Panc1 (cell line): ENCODE measurements at regions of chr9 and their contacts with region 1.

Region 1: DNA sequence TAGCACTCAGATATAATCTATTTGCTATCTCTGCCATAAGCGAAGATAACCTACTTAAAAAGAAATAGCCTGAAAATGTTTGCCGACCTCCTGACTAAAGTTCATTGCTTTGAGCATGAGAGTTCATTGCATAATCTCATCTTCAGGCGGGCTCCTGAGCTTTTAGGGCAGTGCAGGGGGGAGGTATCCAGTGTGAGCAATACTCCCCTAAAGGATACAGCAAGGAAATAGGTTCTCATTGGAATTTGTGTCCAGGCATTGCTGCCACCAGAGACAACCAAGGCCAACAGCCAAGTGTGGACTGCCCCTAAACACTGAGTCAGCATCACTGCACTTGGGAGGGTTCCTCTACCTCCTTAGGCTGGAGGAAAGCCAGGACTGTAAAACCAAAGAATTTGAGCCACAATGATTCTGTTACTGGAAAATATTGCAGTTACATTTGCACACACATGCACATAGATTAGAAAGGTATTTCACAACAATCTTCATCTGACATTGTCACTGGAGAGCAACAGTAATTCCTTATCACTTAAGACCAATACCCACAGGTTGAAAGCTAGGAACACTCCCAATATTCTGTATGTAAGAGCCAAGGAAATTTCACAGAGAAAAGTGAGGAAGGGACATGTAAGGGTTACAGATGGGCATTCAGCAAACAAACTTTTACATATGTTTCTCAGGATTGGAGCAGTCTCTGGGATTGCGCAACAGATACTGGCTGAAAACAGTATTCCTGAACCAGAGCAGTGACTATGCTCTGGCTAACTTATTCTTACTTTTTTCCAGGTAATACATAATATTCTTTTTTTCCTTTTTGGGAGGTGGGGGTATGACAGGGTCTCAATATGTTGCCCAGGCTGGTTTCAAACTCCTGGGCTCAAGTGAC is 98.6 kb upstream of the TLE1 start:
- DNase-seq: no peak
- ATAC-seq: no peak
- H3K4me3 ChIP-seq: no peak overlapping the region
- H3K27ac ChIP-seq: no peak overlapping the region
- H3K4me1 ChIP-seq: no peaks in the 10 kb centered on the region
- H3K27me3 ChIP-seq: no peaks in the 10 kb centered on the region
- CTCF ChIP-seq: no peak

Region 2: DNA sequence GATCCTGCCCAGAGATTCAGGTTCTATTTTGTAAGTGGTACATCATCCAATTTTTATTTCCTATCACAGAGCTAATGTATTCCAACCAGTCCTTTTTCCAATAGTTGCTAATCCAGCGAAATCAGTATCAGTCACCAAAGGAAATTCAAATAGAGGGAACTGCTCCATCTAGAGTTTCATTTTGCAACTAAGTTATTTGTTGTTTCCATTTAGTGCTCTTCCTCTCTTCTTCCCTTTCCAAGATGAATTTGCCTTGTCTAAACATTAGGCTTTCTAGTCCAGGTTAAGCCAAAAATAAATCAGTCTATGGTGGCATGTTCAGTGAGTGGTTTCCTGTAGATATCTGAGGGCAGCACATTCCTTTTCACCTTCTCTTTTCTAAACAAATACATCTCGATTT is 60.5 kb after region 1 on chr9:
- CTCF ChIA-PET with region 1: no interaction called
- POLR2A ChIA-PET with region 1: no interaction called
- in situ Hi-C with region 1: no loop called
- intact Hi-C with region 1: no loop called
- DNase-seq: no peak
- ATAC-seq: no peak
- H3K4me3 ChIP-seq: no peak overlapping the region
- H3K27ac ChIP-seq: no peak overlapping the region
- H3K4me1 ChIP-seq: no peaks in the 10 kb centered on the region
- H3K27me3 ChIP-seq: no peaks in the 10 kb centered on the region
- CTCF ChIP-seq: peak; percentile 22; the same call in 1 of the 2 replicates

Region 3: GRCh38 chr9:82938340-82938739 is 1150.3 kb after region 1 on chr9:
- CTCF ChIA-PET with region 1: no interaction called
- POLR2A ChIA-PET with region 1: interaction called, 19 read pairs
- in situ Hi-C with region 1: no loop called
- intact Hi-C with region 1: no loop called
- DNase-seq: no peak
- ATAC-seq: no peak
- H3K4me3 ChIP-seq: no peak overlapping the region
- H3K27ac ChIP-seq: no peak overlapping the region
- H3K4me1 ChIP-seq: no peaks in the 10 kb centered on the region
- H3K27me3 ChIP-seq: no peaks in the 10 kb centered on the region
- CTCF ChIP-seq: no peak